ENCODE measurements at regions of chr14 and their contacts with region 1.

Region 1: DNA sequence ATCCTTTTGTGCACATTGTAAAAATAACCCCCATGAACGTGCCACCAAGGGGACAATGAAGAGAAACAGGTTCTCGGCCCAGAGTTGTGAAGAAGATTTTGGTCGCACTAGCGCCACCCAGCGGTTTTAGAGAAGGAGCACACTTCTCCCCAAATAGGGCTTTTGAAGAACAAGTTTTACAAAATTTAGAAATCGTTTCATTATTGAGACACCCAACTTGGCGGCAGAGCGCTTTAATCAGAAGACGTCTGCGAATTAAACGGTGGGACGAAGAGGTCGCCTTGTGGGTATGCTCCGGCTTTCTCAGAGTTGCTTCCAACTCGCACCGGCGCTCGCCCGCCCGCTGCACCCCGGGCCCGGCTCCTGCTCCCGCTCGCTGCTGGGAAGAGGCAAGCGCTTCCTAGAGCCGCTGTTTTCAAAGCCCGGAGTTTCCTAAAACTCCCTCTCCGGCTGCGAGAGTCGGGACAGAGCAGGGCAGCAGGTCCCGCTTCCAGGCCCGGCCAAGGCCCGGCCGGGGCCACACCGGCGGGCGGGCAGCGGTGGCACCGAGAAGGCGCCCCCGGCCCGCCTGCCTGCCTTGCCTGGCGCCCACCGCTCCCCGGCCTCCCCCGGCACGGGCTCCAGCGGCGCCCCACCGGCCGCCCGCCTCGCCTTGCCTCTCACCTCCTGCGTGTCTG is 673 bp downstream of the FOXA1 start:
- DNase-seq: peak in 1 of 2 donors; percentile 34
- ATAC-seq: peak in 1 of 8 donors; percentile 8
- H3K4me3 ChIP-seq: peak overlapping the region in 8 of 10 donors; percentile 6 to 46 (median 39)
- H3K27ac ChIP-seq: no peak overlapping the region
- H3K4me1 ChIP-seq: peaks cover 3 to 49% (median 34%) of the 10 kb centered on the region in 9 donors
- H3K27me3 ChIP-seq: peaks cover 46 to 99% (median 98%) of the 10 kb centered on the region in 7 donors
- CTCF ChIP-seq: peak in 8 of 9 donors; percentile 14 to 63 (median 56)

Region 2: DNA sequence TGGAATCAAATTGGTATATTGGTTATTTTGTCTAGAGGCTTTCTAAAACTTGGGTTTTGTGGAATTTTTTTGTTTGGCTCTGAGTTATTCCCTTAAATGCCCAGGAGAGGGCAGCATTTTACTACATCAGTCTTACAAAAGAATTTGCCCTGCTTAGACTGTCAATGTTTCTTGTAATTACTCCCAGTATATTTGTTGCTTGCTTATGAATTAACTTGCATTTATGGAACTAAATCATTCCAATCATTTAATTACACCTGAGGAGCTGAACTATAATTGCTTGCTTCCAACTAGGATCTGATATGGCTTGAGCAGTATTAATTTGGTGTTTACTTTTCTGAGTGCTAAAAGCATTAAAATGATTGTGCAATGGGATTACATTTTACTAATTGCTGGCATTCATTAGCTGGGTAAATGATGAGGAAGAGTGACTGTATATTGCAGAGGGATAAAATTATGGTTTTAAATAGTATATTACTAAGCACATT is 347.9 kb before region 1 on chr14:
- intact Hi-C with region 1: loop called in 2 of 10 experiments (anchors 5 to 10 kb)
- DNase-seq: no peak
- ATAC-seq: no peak
- H3K4me3 ChIP-seq: no peak overlapping the region
- H3K27ac ChIP-seq: no peak overlapping the region
- H3K4me1 ChIP-seq: no peaks in the 10 kb centered on the region
- H3K27me3 ChIP-seq: no peaks in the 10 kb centered on the region
- CTCF ChIP-seq: peak; percentile 52 to 88 (median 76)

Region 3: GRCh38 chr14:37253905-37254304 is 340.5 kb before region 1 on chr14:
- intact Hi-C with region 1: loop called in 2 of 10 experiments (anchors 5 to 10 kb)
- DNase-seq: no peak
- ATAC-seq: no peak
- H3K4me3 ChIP-seq: no peak overlapping the region
- H3K27ac ChIP-seq: no peak overlapping the region
- H3K4me1 ChIP-seq: no peaks in the 10 kb centered on the region
- H3K27me3 ChIP-seq: no peaks in the 10 kb centered on the region
- CTCF ChIP-seq: no peak

Measured in heart right ventricle (tissue), 16 donors.